Adrenal gland (tissue), 19 donors: ENCODE measurements at regions of chr3 and their contacts with region 1.

Region 1: DNA sequence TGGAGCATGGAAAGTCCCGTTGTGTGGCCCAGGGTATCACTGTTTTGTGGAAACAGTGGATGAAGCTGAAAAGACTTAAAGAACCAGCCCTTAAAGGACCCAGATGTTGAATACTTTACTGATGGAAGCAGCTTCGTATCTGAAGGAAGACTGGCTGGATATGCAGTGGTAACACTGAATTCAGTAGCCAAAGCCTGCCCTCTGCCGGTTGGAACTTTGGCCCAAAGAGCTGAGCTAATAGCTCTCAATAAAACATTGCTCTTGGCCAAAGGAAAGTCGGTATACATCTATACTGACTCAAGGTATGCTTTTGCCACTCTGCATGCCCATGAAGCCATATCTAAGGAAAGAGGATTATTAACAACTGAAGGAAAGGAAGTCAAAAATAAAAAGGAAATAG is 885.4 kb downstream of the PDCD6IP start:
- DNase-seq: peak; percentile 31 to 87 (median 58)
- H3K4me3 ChIP-seq: no peak overlapping the region
- H3K27ac ChIP-seq: no peak overlapping the region
- H3K4me1 ChIP-seq: no peaks in the 10 kb centered on the region
- H3K27me3 ChIP-seq: no peaks in the 10 kb centered on the region
- CTCF ChIP-seq: peak; percentile 26 to 60 (median 50)
- POLR2A ChIP-seq: no peak

Region 2: DNA sequence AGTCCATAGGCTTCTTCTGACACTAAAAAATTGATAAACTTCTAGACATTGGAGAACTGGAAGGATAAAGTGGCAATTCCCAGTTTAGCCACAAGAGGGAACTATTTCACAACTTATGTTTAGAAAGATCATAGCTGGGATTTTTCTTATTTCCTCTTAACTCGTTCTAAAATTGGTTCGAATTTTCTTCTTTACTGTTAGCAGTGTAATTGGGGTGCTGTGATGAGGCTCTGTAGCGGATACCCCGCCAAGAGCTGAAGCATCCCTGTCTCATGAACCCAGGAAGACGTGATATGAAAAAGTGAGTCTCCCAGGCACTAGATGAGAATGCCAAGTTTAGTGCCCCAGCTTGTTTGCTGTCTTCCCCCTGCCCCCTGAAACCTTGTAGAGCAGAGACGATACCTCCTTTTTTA is 800.3 kb before region 1 on chr3:
- intact Hi-C with region 1: loop called (anchors 5 kb)
- DNase-seq: peak in 1 of 7 donors; percentile 36
- H3K4me3 ChIP-seq: no peak overlapping the region
- H3K27ac ChIP-seq: no peak overlapping the region
- H3K4me1 ChIP-seq: no peaks in the 10 kb centered on the region
- H3K27me3 ChIP-seq: no peaks in the 10 kb centered on the region
- CTCF ChIP-seq: peak; percentile 64 to 90 (median 74)
- POLR2A ChIP-seq: no peak

Region 3: GRCh38 chr3:34260271-34261006 is 423.4 kb before region 1 on chr3:
- intact Hi-C with region 1: loop called in 1 of 2 experiments (anchors 10 kb)
- DNase-seq: peak; percentile 36 to 77 (median 56)
- H3K4me3 ChIP-seq: no peak overlapping the region
- H3K27ac ChIP-seq: no peak overlapping the region
- H3K4me1 ChIP-seq: no peaks in the 10 kb centered on the region
- H3K27me3 ChIP-seq: no peaks in the 10 kb centered on the region
- CTCF ChIP-seq: peak; percentile 25 to 57 (median 49)
- POLR2A ChIP-seq: no peak